Sigmoid colon (tissue), 7 donors: ENCODE measurements at regions of chr5 and their contacts with region 1.

Region 1: GRCh38 chr5:81851481-81852178 is 100.7 kb upstream of the SSBP2 start:
- DNase-seq: peak; percentile 98
- H3K4me3 ChIP-seq: peak overlapping the region; percentile 50 to 58 (median 53)
- H3K27ac ChIP-seq: peak overlapping the region; percentile 85 to 90 (median 88)
- H3K4me1 ChIP-seq: peaks cover 0 to 67% (median 43%) of the 10 kb centered on the region in 4 donors
- H3K27me3 ChIP-seq: no peaks in the 10 kb centered on the region
- CTCF ChIP-seq: no peak
- EP300 ChIP-seq: peak; percentile 8 to 82 (median 68)
- POLR2A ChIP-seq: peak in 1 of 2 donors; percentile 15

Region 2: GRCh38 chr5:81425569-81425968 is 426.1 kb before region 1 on chr5:
- intact Hi-C with region 1: loop called (anchors 5 kb)
- DNase-seq: no peak
- H3K4me3 ChIP-seq: no peak overlapping the region
- H3K27ac ChIP-seq: peak overlapping the region in 2 of 4 donors; percentile 35 to 52
- H3K4me1 ChIP-seq: peaks cover 0 to 38% (median 25%) of the 10 kb centered on the region in 4 donors
- H3K27me3 ChIP-seq: no peaks in the 10 kb centered on the region
- CTCF ChIP-seq: peak; percentile 37 to 68 (median 44)
- EP300 ChIP-seq: no peak
- POLR2A ChIP-seq: no peak

Region 3: GRCh38 chr5:81751009-81751835 is 100.4 kb before region 1 on chr5 and contains the start of gene SSBP2:
- intact Hi-C with region 1: loop called (anchors 1 kb)
- DNase-seq: peak; percentile 100
- H3K4me3 ChIP-seq: peak within 1 kb of the TSS; percentile 82 to 95 (median 86)
- H3K27ac ChIP-seq: peak within 1 kb of the TSS; percentile 95 to 100 (median 98)
- H3K4me1 ChIP-seq: peaks cover 0 to 62% (median 44%) of the 10 kb centered on the region in 4 donors
- H3K27me3 ChIP-seq: no peaks in the 10 kb centered on the region
- CTCF ChIP-seq: no peak
- EP300 ChIP-seq: peak in 3 of 4 donors; percentile 73 to 90 (median 80)
- POLR2A ChIP-seq: peak; percentile 64 to 67
- total RNA-seq, gene SSBP2: 68.7 to 89.2 (median 84.6) TPM

Region 4: GRCh38 chr5:81971712-81972495 is 120.3 kb after region 1 on chr5 and contains the start of gene ATG10:
- intact Hi-C with region 1: loop called (anchors 1 kb)
- DNase-seq: peak; percentile 96
- H3K4me3 ChIP-seq: peak within 1 kb of the TSS; percentile 69 to 87 (median 70)
- H3K27ac ChIP-seq: peak within 1 kb of the TSS; percentile 95 to 99 (median 98)
- H3K4me1 ChIP-seq: peaks cover 0 to 19% (median 6%) of the 10 kb centered on the region in 4 donors
- H3K27me3 ChIP-seq: no peaks in the 10 kb centered on the region
- CTCF ChIP-seq: no peak
- EP300 ChIP-seq: no peak
- POLR2A ChIP-seq: peak; percentile 88 to 93
- total RNA-seq, gene ATG10: 6.4 to 13.2 (median 10.7) TPM